RWPE1 (cell line): ENCODE measurements at regions of chr7 and their contacts with region 1.

Region 1: GRCh38 chr7:71733107-71733870 is 601.3 kb downstream of the GALNT17 start:
- DNase-seq: peak; percentile 43
- H3K27ac ChIP-seq: no peak overlapping the region
- CTCF ChIP-seq: peak; percentile 47; the same call in 1 of the 2 replicates

Region 2: GRCh38 chr7:70856866-70857630 is 876.2 kb before region 1 on chr7:
- CTCF ChIA-PET with region 1: interaction called, 13 read pairs
- POLR2A ChIA-PET with region 1: no interaction called
- DNase-seq: peak; percentile 41
- H3K27ac ChIP-seq: no peak overlapping the region
- CTCF ChIP-seq: peak; percentile 3; the same call in 1 of the 2 replicates

Region 3: GRCh38 chr7:71854546-71855397 is 121.5 kb after region 1 on chr7:
- CTCF ChIA-PET with region 1: no interaction called
- POLR2A ChIA-PET with region 1: no interaction called
- DNase-seq: no peak
- H3K27ac ChIP-seq: no peak overlapping the region
- CTCF ChIP-seq: no peak